ENCODE measurements at regions of chr6 and their contacts with region 1.

Region 1: DNA sequence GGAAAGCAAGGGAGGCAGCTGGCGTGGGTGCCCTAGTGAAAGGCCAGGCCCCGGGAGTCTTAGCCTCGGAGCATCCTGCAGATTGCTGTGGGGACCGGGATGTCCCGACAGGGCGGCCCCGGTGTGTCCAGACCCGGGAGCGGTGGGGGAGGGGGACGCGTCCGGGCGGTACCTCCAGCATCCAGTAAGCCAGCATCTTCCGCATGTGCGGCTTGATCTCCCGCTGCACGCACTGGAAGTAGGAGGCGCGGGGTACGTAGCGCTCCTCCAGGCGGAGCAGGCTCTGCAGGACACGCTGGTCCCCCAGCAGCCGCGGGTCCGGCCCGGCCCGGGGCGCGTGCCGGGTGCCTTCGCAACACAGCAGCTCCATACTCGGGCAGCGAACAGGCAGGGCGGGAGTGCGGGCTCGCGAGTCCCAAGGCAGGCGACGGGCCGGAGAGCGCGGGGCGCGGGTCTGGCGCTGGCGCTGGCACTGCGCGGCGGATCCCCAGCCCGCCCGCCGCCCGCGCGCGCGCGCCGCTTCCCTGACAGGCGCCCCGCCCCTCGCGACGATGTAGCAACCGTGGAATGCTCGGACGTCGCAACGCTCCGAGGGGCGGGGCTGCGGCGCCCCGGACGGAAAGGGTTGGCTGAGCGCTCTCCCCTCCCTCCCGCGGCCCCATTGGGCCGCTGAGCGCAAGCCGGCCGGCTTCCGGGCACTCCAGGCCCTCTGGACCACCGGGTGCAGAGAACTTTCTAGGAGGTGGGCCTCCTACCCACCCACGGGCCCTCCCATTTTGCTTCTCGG is at the start of gene CCND3:
- DNase-seq: peak; percentile 94
- H3K4me3 ChIP-seq: peak within 1 kb of the TSS; percentile 56 to 82 (median 66)
- H3K27ac ChIP-seq: peak within 1 kb of the TSS; percentile 86 to 94 (median 89)
- H3K4me1 ChIP-seq: peaks cover 0 to 53% (median 48%) of the 10 kb centered on the region in 4 donors
- H3K27me3 ChIP-seq: no peaks in the 10 kb centered on the region
- CTCF ChIP-seq: no peak
- EP300 ChIP-seq: no peak
- POLR2A ChIP-seq: no peak
- total RNA-seq, gene CCND3: 75.1 to 125 (median 110) TPM

Region 2: GRCh38 chr6:41846666-41847237 is 94.7 kb before region 1 on chr6:
- intact Hi-C with region 1: loop called (anchors 2 kb)
- DNase-seq: peak; percentile 69
- H3K4me3 ChIP-seq: no peak overlapping the region
- H3K27ac ChIP-seq: peak overlapping the region in 3 of 4 donors; percentile 35 to 61 (median 54)
- H3K4me1 ChIP-seq: peaks cover 0 to 11% (median 6%) of the 10 kb centered on the region in 4 donors
- H3K27me3 ChIP-seq: no peaks in the 10 kb centered on the region
- CTCF ChIP-seq: peak; percentile 47 to 78 (median 76)
- EP300 ChIP-seq: no peak
- POLR2A ChIP-seq: no peak

Region 3: DNA sequence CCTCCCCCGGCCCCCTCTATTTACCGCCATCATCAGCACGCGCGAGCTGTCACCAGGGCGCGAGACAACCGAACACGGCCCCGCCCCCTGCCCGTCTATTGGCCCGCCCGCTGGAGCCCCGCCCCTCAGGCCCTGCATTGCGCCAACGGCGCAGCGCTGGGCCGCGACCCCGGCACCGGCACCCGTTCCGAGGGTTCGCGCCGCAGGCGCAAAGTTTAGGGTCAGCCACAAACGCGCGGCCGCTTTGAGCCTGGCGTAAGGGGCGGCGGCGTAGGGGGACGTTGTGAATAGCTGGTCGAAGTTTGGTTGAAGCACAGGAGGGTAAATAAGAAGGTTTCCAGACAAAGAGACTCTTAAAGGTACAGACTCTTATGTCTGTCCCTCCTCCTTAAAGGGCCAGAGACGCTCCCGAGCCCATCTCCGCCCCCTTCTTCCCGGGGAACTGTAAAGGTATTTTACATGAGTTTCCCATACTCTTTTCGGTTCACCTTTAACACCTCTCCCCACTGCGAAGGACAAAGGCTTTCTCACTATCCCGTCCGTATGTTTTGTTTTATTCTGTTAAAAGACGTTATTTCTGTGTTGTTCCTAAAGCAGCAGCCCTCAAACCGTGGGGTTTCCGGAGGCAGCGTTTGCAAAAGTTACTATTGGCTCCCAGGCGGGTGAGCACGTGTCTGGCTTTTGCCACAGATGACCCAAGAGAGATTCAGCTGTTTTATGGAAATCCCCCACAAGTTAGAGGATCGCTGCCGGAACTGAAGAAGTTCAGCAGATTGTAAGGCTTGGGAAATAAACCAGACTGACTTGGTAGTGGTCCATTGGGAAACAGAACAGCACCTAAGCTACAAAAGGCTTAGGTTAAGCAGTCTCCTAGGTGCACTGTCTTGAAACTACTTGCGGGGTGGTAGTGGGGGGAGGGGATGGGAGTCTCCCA is 45.9 kb before region 1 on chr6 and contains the start of gene USP49:
- intact Hi-C with region 1: loop called (anchors 2 kb)
- DNase-seq: peak; percentile 94
- H3K4me3 ChIP-seq: peak within 1 kb of the TSS; percentile 58 to 79 (median 75)
- H3K27ac ChIP-seq: peak within 1 kb of the TSS; percentile 81 to 89 (median 84)
- H3K4me1 ChIP-seq: peaks cover 0 to 20% (median 12%) of the 10 kb centered on the region in 4 donors
- H3K27me3 ChIP-seq: no peaks in the 10 kb centered on the region
- CTCF ChIP-seq: no peak
- EP300 ChIP-seq: no peak
- POLR2A ChIP-seq: no peak
- total RNA-seq, gene USP49: 2.1 to 10.0 (median 3.1) TPM